Mammary epithelial cell (primary cell): ENCODE measurements at regions of chr16 and their contacts with region 1.

Region 1: GRCh38 chr16:68658258-68659008 is 13.3 kb downstream of the CDH3 start:
- DNase-seq: peak; percentile 99
- H3K4me3 ChIP-seq: no peak overlapping the region
- H3K27ac ChIP-seq: peak overlapping the region; percentile 99
- H3K4me1 ChIP-seq: peaks cover 64% of the 10 kb centered on the region
- H3K27me3 ChIP-seq: no peaks in the 10 kb centered on the region
- CTCF ChIP-seq: no peak

Region 2: DNA sequence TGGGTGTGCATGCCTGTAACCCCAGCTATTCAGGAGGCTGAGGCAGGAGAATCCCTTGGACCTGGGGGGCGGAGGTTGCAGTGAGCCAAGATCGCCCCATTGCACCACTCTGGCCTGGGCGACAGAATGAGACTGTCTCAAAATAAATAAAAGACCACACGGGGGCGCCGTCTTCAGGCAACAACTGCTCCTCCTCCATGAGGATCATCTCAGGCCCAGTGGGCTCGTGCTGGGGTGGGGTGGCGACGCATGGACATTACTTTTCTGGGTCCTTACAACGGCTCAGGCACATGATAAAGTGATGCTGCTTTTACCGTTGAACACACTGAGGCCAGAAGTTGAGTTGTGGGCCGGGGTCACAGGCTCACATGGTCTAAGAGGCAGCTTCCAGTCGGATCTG is 291.4 kb before region 1 on chr16:
- CTCF ChIA-PET with region 1: interaction called, 12 read pairs
- dilution Hi-C with region 1: no loop called
- in situ Hi-C with region 1: no loop called
- intact Hi-C with region 1: no loop called
- DNase-seq: no peak
- H3K4me3 ChIP-seq: no peak overlapping the region
- H3K27ac ChIP-seq: no peak overlapping the region
- H3K4me1 ChIP-seq: no peaks in the 10 kb centered on the region
- H3K27me3 ChIP-seq: no peaks in the 10 kb centered on the region
- CTCF ChIP-seq: peak; percentile 34 to 45

Region 3: GRCh38 chr16:68452176-68452575 is 206.3 kb before region 1 on chr16:
- CTCF ChIA-PET with region 1: no interaction called
- dilution Hi-C with region 1: no loop called
- in situ Hi-C with region 1: no loop called
- intact Hi-C with region 1: no loop called
- DNase-seq: no peak
- H3K4me3 ChIP-seq: no peak overlapping the region
- H3K27ac ChIP-seq: no peak overlapping the region
- H3K4me1 ChIP-seq: peaks cover 7% of the 10 kb centered on the region
- H3K27me3 ChIP-seq: peaks cover 4% of the 10 kb centered on the region
- CTCF ChIP-seq: no peak